Esophagus muscularis mucosa (tissue), 4 donors: ENCODE measurements at regions of chr7 and their contacts with region 1.

Region 1: DNA sequence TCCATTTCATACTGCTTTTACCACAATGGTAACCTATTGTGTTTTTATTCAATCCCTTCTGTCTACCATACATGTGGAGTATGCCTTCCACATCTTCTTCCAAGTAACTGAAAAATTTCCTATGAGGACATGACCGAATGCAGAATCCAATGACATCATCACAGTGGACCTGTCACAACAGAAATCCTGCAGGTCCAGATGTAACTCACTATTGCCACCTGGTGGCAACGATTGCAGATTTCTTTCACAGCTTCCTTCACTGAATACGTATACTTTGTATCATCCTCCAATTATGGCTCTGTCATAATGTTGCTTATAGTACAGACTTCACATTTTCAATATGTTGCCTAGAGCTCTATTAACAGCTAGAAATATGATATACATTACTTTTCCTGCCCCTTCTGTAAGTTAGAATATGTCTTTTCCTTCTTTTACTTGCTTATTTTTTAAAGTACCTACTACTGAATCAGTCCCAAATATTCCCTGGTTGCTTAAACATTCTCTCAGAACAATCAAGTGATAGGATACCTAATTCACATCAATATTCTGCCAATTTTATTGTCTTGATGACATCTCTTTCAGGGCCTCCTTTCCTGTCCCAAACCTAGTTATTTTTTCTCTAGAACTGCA is 45.4 kb downstream of the SLC13A1 start:
- DNase-seq: peak; percentile 94
- H3K4me3 ChIP-seq: no peak overlapping the region
- H3K27ac ChIP-seq: peak overlapping the region in 2 of 4 donors; percentile 34 to 41
- H3K4me1 ChIP-seq: peaks cover 0 to 12% (median 4%) of the 10 kb centered on the region in 4 donors
- H3K27me3 ChIP-seq: no peaks in the 10 kb centered on the region
- CTCF ChIP-seq: peak; percentile 80 to 86 (median 84)
- EP300 ChIP-seq: no peak
- POLR2A ChIP-seq: no peak

Region 2: DNA sequence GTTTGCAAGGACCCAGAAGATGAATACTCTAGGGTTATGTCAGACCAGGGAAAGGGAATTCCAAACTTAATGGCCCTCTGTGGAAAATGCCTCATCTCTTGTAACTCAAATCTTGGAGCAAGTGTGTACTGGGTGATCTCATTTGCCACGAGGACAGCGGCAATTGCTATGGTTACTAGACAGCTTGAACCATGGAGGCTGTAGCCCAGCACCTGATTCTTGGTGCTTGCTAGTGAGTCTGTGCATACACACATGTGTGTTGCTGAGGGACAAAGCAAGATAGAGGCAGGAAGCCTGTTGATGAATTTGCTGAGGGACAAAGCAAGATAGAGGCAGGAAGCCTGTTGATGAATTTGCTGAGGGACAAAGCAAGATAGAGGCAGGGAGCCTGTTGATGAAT is 791.2 kb before region 1 on chr7:
- intact Hi-C with region 1: no loop called
- DNase-seq: no peak
- H3K4me3 ChIP-seq: no peak overlapping the region
- H3K27ac ChIP-seq: no peak overlapping the region
- H3K4me1 ChIP-seq: no peaks in the 10 kb centered on the region
- H3K27me3 ChIP-seq: no peaks in the 10 kb centered on the region
- CTCF ChIP-seq: no peak
- EP300 ChIP-seq: no peak
- POLR2A ChIP-seq: no peak

Region 3: GRCh38 chr7:122886357-122887081 is 267.8 kb before region 1 on chr7 and contains the start of gene CADPS2:
- intact Hi-C with region 1: loop called (anchors 5 kb)
- DNase-seq: no peak
- H3K4me3 ChIP-seq: peak within 1 kb of the TSS; percentile 83 to 99 (median 89)
- H3K27ac ChIP-seq: peak within 1 kb of the TSS; percentile 93 to 97 (median 94)
- H3K4me1 ChIP-seq: peaks cover 2 to 47% (median 37%) of the 10 kb centered on the region in 4 donors
- H3K27me3 ChIP-seq: no peaks in the 10 kb centered on the region
- CTCF ChIP-seq: peak; percentile 21 to 53 (median 22)
- EP300 ChIP-seq: no peak
- POLR2A ChIP-seq: peak; percentile 48
- total RNA-seq, gene CADPS2: 27.3 to 154 (median 114) TPM

Region 4: GRCh38 chr7:122896509-122896908 is 257.8 kb before region 1 on chr7:
- intact Hi-C with region 1: loop called (anchors 5 kb)
- DNase-seq: no peak
- H3K4me3 ChIP-seq: no peak overlapping the region
- H3K27ac ChIP-seq: no peak overlapping the region
- H3K4me1 ChIP-seq: peaks cover 0 to 7% (median 0%) of the 10 kb centered on the region in 4 donors
- H3K27me3 ChIP-seq: no peaks in the 10 kb centered on the region
- CTCF ChIP-seq: peak in 1 of 3 experiments; percentile 12
- EP300 ChIP-seq: no peak
- POLR2A ChIP-seq: no peak